ENCODE measurements at regions of chr2 and their contacts with region 1.

Region 1: DNA sequence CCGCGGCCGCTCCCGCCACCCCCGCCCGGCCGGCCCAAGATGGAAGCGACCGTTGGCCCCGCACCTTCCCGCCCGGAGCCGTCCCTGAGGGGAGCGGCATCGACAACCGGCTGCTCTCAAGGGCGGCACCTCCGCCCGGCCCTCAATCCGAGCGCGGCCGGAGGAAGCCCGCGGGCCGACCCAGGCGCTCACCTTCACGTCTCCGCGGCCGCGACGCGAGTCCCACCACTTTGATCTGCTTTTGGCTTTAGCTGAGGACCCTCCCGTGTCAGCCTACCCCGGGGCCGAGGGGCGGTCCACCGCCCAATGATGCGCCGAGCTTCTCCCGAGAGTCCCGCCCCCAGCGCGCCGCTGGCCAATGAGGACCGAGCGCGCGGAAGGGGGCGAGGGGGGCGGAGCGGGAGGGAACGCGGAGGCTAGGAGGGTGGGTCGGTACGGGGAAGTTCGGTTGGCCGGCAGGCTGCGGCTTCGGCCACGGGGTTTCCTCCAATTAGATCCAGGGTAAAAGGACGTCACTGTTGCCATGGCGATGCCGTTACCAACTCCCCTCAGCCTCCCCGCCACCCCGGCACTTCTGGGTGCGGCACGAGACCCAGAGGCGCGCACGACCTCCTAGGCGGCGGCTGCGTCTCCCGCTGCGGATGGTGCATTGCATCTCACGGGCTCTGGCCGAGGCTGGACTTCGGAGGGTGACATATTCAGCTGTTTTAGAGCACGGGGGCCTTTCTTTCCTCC is at the start of gene YWHAQ:
- DNase-seq: peak; percentile 97
- H3K4me3 Mint-ChIP-seq: peak within 1 kb of the TSS; percentile 97
- H3K27ac Mint-ChIP-seq: peak within 1 kb of the TSS; percentile 93
- H3K4me1 Mint-ChIP-seq: peaks cover 45% of the 10 kb centered on the region
- H3K27me3 Mint-ChIP-seq: peaks cover 9% of the 10 kb centered on the region
- total RNA-seq, gene YWHAQ: 290 and 311 TPM in 2 replicates

Region 2: GRCh38 chr2:9474361-9474967 is 156.5 kb before region 1 on chr2 and contains the start of gene IAH1:
- intact Hi-C with region 1: loop called (anchors 2 kb)
- DNase-seq: peak; percentile 70
- H3K4me3 Mint-ChIP-seq: peak within 1 kb of the TSS; percentile 84
- H3K27ac Mint-ChIP-seq: peak within 1 kb of the TSS; percentile 84
- H3K4me1 Mint-ChIP-seq: peaks cover 48% of the 10 kb centered on the region
- H3K27me3 Mint-ChIP-seq: no peaks in the 10 kb centered on the region
- total RNA-seq, gene IAH1: 78.6 and 89.3 TPM in 2 replicates

Region 3: GRCh38 chr2:9703085-9703641 is 72.2 kb after region 1 on chr2:
- intact Hi-C with region 1: loop called (anchors 1 kb)
- DNase-seq: peak; percentile 79
- H3K4me3 Mint-ChIP-seq: no peak overlapping the region
- H3K27ac Mint-ChIP-seq: peak overlapping the region; percentile 74
- H3K4me1 Mint-ChIP-seq: peaks cover 48% of the 10 kb centered on the region
- H3K27me3 Mint-ChIP-seq: no peaks in the 10 kb centered on the region

Measured in activated T-helper 1 cell treated with anti-CD3 and anti-CD28 coated beads, Interleukin-12 subunit alpha, Interleukin-12 subunit beta, Interleukin-2, Interleukin-4 antibody, amounts not matched to agents 30 ng/mL and 10 ng/mL and 1 ng/mL, durations not matched to agents 14 hours and 24 hours and 36 hours (primary cell).